Body of pancreas (tissue), 4 donors: ENCODE measurements at regions of chr6 and their contacts with region 1.

Region 1: GRCh38 chr6:134174672-134175198 is 122.3 kb upstream of the SLC2A12 start:
- DNase-seq: peak; percentile 95 to 97 (median 96)
- ATAC-seq: peak; percentile 78
- H3K4me3 ChIP-seq: peak overlapping the region; percentile 57 to 87
- H3K27ac ChIP-seq: peak overlapping the region; percentile 98 to 100 (median 99)
- H3K4me1 ChIP-seq: peaks cover 45% of the 10 kb centered on the region
- H3K27me3 ChIP-seq: no peaks in the 10 kb centered on the region
- CTCF ChIP-seq: peak in 2 of 7 experiments; percentile 0 to 23
- POLR2A ChIP-seq: peak; percentile 96 to 100 (median 100)

Region 2: DNA sequence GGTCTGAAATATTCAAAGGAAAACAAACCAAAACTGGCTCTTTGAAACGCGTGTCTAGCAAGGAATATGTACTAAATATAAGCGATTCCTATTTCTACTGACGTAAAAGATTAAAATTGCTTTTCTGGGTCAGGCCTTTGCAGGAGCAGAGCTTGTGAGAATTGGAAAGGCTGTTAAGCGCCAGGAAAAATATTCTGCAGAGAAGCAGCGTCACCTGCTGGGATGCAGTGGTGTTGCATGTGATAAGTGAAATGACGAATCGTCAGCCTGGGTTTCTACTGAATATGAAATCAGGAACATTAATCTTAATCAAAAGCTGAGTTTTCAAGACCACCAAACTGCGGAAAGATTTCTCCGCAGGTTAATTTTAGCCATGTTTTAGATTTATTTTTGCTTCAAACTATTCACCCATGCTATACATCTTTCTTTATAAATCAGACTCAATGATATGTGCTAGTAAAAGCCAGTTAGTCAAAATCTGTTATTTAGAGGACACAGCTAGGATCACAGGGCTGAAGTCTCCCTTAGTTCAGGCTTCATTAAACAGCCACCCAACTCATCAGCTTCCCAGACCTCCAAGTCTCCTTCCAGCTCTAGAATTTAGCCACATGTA is 707.8 kb after region 1 on chr6:
- intact Hi-C with region 1: loop called (anchors 5 kb)
- DNase-seq: peak; percentile 65 to 73 (median 70)
- ATAC-seq: peak; percentile 86
- H3K4me3 ChIP-seq: no peak overlapping the region
- H3K27ac ChIP-seq: no peak overlapping the region
- H3K4me1 ChIP-seq: peaks cover 7% of the 10 kb centered on the region
- H3K27me3 ChIP-seq: no peaks in the 10 kb centered on the region
- CTCF ChIP-seq: peak; percentile 50 to 98 (median 93)
- POLR2A ChIP-seq: no peak